Panc1 (cell line): ENCODE measurements at regions of chr22 and their contacts with region 1.

Region 1: DNA sequence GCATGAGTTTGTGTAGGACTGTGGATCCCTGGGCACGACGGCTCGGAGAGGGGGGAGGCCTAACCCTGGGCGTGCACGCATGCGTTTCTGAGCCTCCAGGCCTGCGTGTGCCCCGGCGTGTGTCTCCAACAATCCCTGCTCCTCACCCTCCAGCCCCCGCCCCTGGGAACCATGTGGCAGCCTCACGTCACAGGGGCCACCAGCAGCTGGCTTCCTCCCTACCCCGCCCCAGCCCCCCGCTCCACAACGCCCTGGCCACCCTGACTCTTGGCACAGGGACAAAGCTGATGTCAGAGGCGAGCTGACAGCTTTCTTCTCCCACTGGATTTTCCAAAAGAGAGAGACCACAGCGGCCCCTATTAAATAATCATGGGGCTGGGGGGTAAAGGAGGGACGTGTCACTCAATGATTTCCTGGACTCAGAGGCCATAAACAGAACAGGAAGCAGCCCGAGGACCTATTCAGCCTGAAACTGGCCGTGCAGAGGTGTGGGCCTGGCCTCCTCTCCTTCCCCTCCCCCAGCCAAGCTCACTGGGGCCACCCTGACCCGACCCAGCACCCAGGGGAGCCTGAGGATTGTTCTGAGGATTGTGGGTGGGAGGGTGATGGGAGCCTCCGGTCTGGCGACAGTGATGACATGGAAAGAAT is 6.8 kb upstream of the LIF start:
- DNase-seq: no peak
- ATAC-seq: 0 out of 2 replicates have a peak, but pooled peaks have one; percentile 2
- H3K4me3 ChIP-seq: peak overlapping the region in 1 of 2 experiments; percentile 80; a peak in 2 of 4 replicates
- H3K27ac ChIP-seq: peak overlapping the region; percentile 98
- H3K4me1 ChIP-seq: peaks cover 69% of the 10 kb centered on the region
- H3K27me3 ChIP-seq: no peaks in the 10 kb centered on the region
- CTCF ChIP-seq: no peak

Region 2: DNA sequence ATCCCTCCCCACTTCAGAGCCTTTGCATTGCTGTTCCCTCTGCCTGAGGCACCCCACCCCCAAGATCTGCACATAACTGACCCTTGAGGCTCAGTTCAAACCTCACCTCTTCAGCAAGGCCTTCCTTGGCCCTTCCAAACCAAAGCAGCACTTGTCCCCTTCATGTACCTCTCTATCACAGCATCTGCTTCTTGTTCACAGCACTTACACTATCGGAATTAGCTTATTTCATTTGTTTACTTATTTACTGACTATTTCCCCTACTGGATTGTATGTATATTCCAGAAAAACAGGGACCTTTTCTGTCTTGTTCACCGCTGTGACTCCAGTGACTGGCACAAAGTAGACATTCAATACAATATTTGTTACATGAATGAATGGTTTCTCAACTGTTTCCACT is 135.0 kb before region 1 on chr22:
- CTCF ChIA-PET with region 1: no interaction called
- POLR2A ChIA-PET with region 1: interaction called, 11 read pairs
- in situ Hi-C with region 1: no loop called
- intact Hi-C with region 1: no loop called
- DNase-seq: no peak
- ATAC-seq: no peak
- H3K4me3 ChIP-seq: no peak overlapping the region
- H3K27ac ChIP-seq: peak overlapping the region; percentile 18; the same call in 1 of the 2 replicates
- H3K4me1 ChIP-seq: peaks cover 3% of the 10 kb centered on the region; the same call in 1 of the 2 replicates
- H3K27me3 ChIP-seq: no peaks in the 10 kb centered on the region
- CTCF ChIP-seq: no peak